ENCODE measurements at regions of chr5 and their contacts with region 1.

Region 1: DNA sequence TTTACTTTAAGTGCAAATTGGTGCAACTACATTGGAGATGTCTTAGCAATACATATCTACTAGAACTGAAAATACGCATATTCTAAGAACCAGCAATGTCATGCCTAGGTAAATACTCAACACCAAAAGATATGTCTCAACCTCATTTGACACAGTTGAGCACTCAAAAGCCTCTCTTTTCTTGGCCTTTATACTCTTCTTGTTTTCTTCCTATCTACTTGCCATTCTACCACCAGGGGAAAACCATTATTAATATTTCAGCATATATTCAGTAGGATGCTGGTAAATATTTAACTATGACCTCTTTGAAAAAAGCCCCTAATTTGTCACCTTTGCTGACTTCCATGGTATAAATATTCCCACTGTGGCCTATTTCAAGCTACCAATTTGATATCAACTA is 443.8 kb downstream of the LRRC70 start:
- DNase-seq: no peak
- H3K4me3 Mint-ChIP-seq: no peak overlapping the region
- H3K27ac Mint-ChIP-seq: no peak overlapping the region
- H3K4me1 Mint-ChIP-seq: no peaks in the 10 kb centered on the region
- H3K27me3 Mint-ChIP-seq: no peaks in the 10 kb centered on the region

Region 2: GRCh38 chr5:62465985-62466925 is 556.1 kb before region 1 on chr5:
- CTCF ChIA-PET with region 1: no interaction called
- intact Hi-C with region 1: loop called (anchors 5 kb)
- DNase-seq: no peak
- H3K4me3 Mint-ChIP-seq: no peak overlapping the region
- H3K27ac Mint-ChIP-seq: no peak overlapping the region
- H3K4me1 Mint-ChIP-seq: no peaks in the 10 kb centered on the region
- H3K27me3 Mint-ChIP-seq: no peaks in the 10 kb centered on the region

Measured in activated naive CD4-positive, alpha-beta T cell treated with anti-CD3 and anti-CD28 coated beads for 36 hours (primary cell).